ENCODE measurements at regions of chr12 and their contacts with region 1.

Region 1: DNA sequence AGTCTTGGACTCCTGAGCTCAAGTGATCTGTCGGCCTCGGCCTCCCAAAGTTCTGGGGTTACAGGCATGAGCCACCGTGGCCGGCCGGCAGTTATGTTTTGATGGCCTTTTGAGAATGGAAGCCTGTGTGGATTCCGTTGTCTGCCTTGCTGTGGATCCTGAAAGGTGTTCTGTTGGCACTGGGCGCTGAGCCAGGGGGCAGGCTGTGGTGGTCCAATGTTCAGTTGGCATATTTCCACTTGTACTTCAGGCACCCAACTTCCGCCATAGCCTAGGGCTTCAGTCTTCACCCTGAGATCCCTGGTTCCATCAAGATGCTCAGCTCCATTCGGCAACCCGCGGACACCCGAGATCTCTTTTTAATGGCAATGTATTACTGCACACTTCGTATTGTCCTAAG is 6.3 kb upstream of the RPLP0 start:
- DNase-seq: no peak
- ATAC-seq: no peak
- H3K4me3 Mint-ChIP-seq: no peak overlapping the region
- H3K27ac Mint-ChIP-seq: no peak overlapping the region
- H3K4me1 Mint-ChIP-seq: peaks cover under 1% of the 10 kb centered on the region
- H3K27me3 Mint-ChIP-seq: no peaks in the 10 kb centered on the region
- CTCF ChIP-seq: no peak

Region 2: DNA sequence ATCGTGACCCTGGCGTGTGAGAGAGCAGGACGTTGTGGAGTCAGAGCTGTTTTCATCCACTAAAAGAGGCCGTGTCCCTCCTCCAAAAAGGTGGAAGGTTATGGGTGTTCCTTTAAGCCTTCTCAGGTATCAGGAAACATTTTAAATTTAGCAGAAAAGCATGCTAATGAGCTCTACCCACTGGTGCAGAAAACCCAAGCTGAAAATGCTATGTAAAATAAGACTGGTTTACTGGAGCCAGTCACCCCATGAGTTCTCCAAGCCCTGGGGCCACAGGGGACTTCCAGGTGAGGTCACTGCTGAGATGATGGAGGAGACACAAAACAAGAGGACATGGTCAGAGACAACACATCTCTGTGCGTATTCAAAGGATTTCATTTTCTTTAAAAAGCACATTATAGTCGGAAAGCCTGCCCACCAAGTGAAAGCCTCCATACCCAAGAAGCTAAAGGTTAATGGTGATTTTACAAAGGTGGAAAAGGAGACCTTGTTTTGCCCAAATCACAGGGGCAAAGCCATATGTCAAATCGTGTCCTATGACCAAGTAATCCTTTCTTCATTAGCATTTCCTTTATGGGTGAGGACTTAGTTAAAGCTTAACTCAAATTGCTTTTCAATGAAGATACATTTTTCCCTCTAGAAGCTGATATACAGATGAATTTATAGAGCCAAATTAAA is 525.1 kb before region 1 on chr12:
- CTCF ChIA-PET with region 1: no interaction called
- POLR2A ChIA-PET with region 1: interaction called, 12 read pairs
- DNase-seq: no peak
- ATAC-seq: peak; percentile 12; the same call in 1 of the 2 replicates
- H3K4me3 Mint-ChIP-seq: no peak overlapping the region
- H3K27ac Mint-ChIP-seq: peak overlapping the region; percentile 93
- H3K4me1 Mint-ChIP-seq: peaks cover 18% of the 10 kb centered on the region
- H3K27me3 Mint-ChIP-seq: no peaks in the 10 kb centered on the region
- CTCF ChIP-seq: no peak

Measured in WTC11 (cell line).